ENCODE measurements at regions of chr20 and their contacts with region 1.

Region 1: DNA sequence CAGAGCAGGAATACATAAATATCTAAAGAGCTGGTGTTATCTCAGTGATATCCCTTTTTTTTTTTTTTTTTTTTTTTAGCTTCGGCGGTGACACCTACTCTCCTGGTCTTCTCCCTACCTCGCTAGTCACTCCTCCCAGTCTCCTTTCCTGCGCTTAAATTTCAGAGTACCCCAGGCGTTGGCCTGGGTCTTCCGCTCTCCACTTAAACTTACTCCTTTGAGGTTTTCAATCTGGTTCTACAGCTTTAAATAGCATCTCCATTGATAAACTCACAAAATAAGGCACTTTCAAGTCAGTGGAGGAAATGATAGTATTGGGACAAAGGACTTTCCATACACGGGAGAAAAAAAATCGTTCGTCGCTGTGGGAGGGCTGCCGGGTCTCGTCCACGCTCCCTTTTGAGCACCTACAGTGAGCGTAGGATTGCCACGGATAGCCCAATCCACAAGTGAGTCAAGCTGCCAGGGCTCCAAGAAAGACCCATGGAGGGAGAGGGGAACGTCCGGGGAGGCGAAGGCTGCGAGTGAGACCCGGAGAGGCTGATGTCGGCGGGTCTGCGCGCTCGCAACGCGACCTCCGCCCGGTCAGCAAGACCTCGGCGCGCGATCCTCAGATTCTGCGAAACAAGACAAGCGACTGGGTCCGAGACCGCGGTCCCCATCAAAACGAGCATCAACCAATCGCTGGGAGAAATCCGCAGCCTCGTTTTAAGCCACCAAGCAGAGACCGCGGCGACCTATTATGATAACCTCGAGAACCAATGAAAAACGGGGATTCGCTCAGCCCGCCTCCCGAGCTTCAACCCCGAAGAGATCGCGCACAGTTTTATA is 672 bp upstream of the SRSF6 start:
- DNase-seq: peak; percentile 92
- H3K4me3 ChIP-seq: peak overlapping the region; percentile 16 to 99 (median 98)
- H3K27ac ChIP-seq: peak overlapping the region; percentile 100
- H3K4me1 ChIP-seq: peaks cover 11 to 14% of the 10 kb centered on the region in 2 donors
- H3K27me3 ChIP-seq: no peaks in the 10 kb centered on the region
- CTCF ChIP-seq: no peak
- POLR2A ChIP-seq: no peak

Region 2: DNA sequence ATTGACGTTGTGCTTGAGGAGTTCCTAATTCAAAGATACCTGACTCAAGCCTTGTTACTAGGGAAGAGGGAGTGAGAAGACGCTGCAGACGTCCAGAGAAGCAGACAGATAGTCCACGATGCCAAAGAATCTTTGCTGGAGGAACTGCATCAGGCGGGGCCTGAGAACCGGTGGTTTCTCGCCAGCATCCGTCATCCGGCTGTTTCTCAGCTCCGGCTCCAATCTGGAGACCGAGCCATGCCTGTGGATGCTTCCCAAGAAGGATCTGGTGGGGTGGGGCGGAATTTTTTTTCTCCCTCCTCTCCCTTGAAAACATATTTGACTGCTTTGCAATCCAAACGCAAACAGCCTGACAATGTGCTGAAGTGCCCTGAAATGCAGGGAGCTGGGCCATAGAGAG is 125.1 kb before region 1 on chr20:
- intact Hi-C with region 1: no loop called
- DNase-seq: no peak
- H3K4me3 ChIP-seq: no peak overlapping the region
- H3K27ac ChIP-seq: no peak overlapping the region
- H3K4me1 ChIP-seq: no peaks in the 10 kb centered on the region
- H3K27me3 ChIP-seq: no peaks in the 10 kb centered on the region
- CTCF ChIP-seq: no peak
- POLR2A ChIP-seq: no peak

Region 3: DNA sequence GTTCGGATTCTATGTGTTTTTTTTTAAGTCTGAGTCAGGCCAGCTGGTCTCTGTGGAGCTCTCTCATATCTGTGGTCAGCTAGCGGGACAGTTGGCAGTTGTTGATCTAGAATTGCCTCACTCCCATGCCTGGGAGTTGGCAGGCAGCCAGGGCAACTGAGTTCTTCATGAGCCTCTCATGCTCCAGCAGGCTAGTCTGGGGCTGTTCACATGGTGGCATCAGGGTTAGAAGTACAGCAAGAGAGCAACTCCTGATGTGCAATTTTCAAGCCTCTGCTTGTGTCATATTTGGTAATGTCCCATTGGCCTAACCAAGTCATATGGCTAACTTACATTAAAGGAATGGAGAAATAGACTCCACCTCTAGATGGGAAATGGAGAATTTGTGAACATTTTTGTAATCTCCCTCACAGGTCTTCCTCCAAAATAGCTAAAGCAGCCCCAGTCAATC is 127.0 kb after region 1 on chr20:
- intact Hi-C with region 1: loop called (anchors 10 kb)
- DNase-seq: peak; percentile 48 to 65
- H3K4me3 ChIP-seq: no peak overlapping the region
- H3K27ac ChIP-seq: no peak overlapping the region
- H3K4me1 ChIP-seq: peaks cover 0 to 15% of the 10 kb centered on the region in 2 donors
- H3K27me3 ChIP-seq: no peaks in the 10 kb centered on the region
- CTCF ChIP-seq: no peak
- POLR2A ChIP-seq: no peak

Region 4: GRCh38 chr20:44966030-44966961 is 1509.3 kb after region 1 on chr20 and contains the start of gene STK4:
- intact Hi-C with region 1: loop called (anchors 5 kb)
- DNase-seq: peak; percentile 93 to 94
- H3K4me3 ChIP-seq: peak within 1 kb of the TSS; percentile 61 to 96 (median 90)
- H3K27ac ChIP-seq: peak within 1 kb of the TSS; percentile 69 to 90 (median 82)
- H3K4me1 ChIP-seq: peaks cover 9 to 28% of the 10 kb centered on the region in 2 donors
- H3K27me3 ChIP-seq: no peaks in the 10 kb centered on the region
- CTCF ChIP-seq: peak in 5 of 6 experiments; percentile 10 to 48 (median 40)
- POLR2A ChIP-seq: peak in 1 of 2 donors; percentile 88
- total RNA-seq, gene STK4: 18.8 to 37.2 (median 29.2) TPM

Measured in thyroid gland (tissue), 4 donors.